AG04450 (cell line): ENCODE measurements at regions of chr12 and their contacts with region 1.

Region 1: DNA sequence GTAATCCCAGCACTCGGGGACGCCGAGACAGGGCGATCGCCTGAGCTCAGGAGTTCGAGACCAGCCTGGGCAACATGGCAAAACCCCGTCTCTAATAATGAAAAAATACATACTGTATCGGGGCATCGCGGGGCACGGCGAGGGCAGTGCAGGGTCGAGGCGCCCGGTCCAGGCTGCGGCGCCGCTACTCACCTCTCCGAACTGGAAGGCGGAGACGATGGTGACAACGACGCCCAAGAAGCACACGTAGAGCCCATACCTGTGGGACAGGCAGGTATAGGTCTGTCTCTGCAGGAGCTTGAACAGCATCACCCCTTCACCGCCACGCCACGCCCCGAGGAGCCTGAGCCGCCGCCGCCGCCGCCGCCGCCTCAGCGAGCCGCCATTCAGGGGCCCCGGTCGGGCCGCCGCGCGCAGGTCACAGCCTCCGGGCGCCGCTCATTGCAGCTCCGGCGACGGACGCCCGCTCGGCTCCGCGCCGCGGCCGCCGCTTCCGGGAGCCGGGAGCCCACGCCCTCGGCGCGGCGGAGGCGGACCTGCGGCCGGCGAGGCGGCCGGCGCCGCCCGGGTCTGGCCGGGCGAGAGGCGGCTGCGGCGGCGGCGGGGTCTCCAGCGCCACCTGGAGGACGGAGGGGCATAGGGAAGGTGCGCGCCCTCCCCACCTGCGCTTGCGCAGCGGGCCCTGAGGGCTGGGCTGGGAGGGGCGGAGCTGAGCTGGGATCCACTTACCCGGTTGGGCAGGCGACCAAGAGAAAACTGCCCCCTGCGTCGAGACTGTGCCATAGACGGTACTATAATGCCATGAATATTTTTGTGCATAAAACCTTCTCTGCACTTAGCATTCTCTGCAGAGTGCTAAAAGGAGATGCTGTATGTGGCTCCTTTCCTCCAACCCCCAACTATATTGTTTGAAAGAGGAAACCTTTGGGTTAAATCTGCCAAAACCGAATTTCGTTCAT is at the start of gene GNPTAB:
- DNase-seq: peak; percentile 82
- H3K4me3 ChIP-seq: peak within 1 kb of the TSS; percentile 96
- H3K27ac ChIP-seq: no peak within 1 kb of the TSS
- H3K27me3 ChIP-seq: no peaks in the 10 kb centered on the region
- CTCF ChIP-seq: peak; percentile 67
- polyA plus RNA-seq, gene GNPTAB: 29.0 and 34.3 TPM in 2 replicates

Region 2: DNA sequence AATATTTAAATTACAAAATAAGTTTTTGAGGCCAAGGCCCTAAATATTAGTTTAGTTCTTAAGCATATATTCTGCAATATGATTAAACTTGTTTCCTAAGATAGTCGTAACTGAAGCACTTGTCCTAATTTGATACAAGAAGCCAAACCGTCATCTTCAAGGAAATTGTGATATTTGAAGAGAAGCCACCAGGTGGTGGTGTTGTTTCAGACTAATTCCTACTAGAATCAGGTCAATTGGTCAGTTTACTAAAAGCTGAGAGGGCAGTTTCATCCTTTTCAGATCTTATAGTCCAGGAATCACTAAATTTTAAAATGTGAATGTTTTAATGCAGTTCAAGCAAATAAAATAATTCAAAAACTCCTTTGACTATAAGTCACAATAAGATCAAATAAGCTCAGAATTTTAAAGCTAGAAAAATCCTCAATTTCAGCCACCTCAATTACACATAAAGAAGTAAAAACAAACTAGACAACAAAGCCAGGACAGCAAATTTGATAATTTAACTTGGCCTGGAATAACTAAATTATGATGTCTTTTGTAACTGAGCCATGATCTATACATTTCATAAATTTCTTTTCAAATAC is 416.0 kb before region 1 on chr12:
- CTCF ChIA-PET with region 1: interaction called, 15 read pairs
- POLR2A ChIA-PET with region 1: no interaction called
- DNase-seq: peak; percentile 30
- H3K4me3 ChIP-seq: no peak overlapping the region
- H3K27ac ChIP-seq: no peak overlapping the region
- H3K27me3 ChIP-seq: no peaks in the 10 kb centered on the region
- CTCF ChIP-seq: peak; percentile 63

Region 3: GRCh38 chr12:101782273-101782731 is 48.3 kb before region 1 on chr12:
- CTCF ChIA-PET with region 1: interaction called, 32 read pairs
- POLR2A ChIA-PET with region 1: no interaction called
- DNase-seq: no peak
- H3K4me3 ChIP-seq: no peak overlapping the region
- H3K27ac ChIP-seq: peak overlapping the region; percentile 53
- H3K27me3 ChIP-seq: no peaks in the 10 kb centered on the region
- CTCF ChIP-seq: no peak

Region 4: GRCh38 chr12:101806265-101806664 is 24.4 kb before region 1 on chr12:
- CTCF ChIA-PET with region 1: interaction called, 14 read pairs
- POLR2A ChIA-PET with region 1: no interaction called
- DNase-seq: no peak
- H3K4me3 ChIP-seq: no peak overlapping the region
- H3K27ac ChIP-seq: no peak overlapping the region
- H3K27me3 ChIP-seq: no peaks in the 10 kb centered on the region
- CTCF ChIP-seq: no peak

Region 5: DNA sequence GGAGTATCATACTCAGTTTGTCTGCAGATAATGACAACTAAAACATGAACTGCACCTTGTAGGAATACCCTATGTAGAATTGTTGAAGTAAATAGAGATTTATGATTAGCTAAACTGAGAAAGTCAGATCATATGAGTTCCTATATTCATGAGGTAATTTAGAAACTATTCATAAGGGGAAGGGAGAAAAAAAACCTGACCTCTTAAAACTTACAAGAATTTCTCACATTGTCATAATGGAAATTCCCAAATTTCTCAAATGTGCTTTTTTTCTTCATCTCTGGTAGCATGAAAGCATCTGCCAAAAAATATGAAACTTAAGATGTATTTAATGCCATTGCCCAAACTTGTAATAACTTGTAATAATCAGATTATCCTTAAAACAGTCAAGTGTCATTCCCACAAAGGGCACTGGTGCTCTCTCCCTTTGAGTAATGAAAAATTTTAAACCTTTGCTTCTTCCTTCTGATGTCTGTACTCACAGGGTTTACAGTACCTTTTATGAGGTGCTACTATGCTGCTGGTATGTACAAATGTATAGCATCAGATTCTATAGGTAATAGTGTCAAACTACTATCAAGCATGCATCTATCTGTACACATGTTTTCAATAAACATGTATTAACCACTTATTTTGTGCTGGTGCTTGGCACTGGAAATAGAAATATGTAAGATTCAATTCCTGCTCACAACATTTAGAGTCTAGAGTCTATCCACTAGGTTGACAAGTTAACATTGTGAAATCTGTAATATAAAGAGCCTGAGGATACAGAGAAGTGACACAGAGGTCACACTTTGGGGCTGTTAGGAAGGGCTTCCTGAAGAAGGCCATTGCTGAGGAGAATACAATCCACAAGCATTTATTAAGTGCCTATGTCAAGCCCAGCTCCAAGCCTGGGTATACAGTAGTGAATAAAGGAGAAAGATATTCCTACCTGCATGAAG is 29.3 kb after region 1 on chr12:
- CTCF ChIA-PET with region 1: interaction called, 11 read pairs
- POLR2A ChIA-PET with region 1: interaction called, 3 read pairs
- DNase-seq: no peak
- H3K4me3 ChIP-seq: no peak overlapping the region
- H3K27ac ChIP-seq: no peak overlapping the region
- H3K27me3 ChIP-seq: no peaks in the 10 kb centered on the region
- CTCF ChIP-seq: no peak